Right ventricle myocardium superior (tissue), 1 donor: ENCODE measurements at regions of chr21 and their contacts with region 1.

Region 1: DNA sequence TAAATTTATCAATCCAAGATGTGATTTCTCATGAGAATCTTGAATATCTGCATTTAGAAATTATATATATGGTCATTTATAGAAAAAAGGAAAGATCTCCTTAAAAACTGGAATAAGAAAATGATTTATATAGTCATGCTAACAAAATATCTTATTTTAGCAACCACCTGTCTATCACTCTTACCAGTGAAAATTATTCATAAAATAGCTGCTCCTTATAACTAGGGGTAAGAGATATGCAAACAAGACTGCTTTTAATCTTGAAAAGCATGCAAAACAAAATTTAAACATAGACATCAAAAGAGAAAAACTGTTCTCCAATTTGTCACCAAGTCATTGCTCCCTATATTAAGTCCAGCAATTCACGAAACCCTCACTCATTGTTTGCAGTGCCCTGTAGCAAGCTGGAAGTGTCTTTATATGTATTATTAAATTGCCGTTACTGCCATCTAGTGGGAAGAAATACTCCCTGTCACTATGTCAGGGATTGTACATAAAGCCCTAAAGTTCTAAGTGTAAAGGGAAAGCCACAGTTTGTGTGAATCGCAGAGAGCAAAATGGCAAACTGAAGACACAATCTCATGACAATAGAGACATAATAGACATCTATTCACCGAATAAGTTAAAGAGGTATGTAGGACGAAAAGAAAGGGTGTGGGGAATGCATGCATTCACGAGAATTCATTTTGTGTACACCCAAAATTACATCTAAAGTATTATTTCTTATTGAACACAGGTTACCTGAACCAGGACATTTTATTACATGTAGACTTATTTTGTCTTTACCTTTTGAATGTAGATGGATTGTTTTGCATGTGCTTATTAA is 600.5 kb downstream of the USP25 start:
- DNase-seq: no peak
- ATAC-seq: peak; percentile 98

Region 2: DNA sequence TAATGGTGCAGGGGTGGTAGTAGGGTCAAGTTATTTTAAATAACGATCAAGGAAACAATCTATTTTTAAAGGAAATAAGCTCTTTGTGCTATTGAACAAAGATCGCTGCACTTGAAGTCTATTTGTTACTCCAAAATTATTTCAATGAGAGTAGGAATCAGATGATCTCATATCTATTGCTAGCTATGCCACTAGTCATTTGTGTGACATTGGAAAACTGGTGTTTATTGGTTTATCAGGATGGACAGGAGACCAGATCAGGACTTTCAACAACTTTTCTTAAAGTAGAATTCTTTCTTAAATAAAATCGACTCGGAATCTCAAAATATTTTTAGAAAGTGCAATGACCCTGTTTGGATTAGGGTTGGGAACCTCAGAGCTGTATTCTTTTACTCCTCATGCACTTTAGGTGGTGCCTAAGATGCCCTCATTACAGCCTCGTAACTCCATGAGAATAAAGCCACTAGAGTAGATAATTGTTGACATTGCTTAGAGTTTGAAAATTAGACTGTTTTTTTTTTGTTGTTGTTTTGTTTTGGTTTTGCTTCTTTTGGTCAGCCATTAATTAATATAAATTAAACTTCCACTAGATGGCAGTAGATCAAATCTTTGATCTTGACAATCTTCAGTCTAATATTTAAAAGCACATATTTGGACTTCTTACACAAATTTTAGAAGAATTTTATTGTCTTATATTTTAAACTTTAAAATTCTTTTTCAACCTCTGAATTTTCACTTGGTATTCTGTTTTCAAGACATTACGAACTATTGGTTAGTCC is 248.1 kb before region 1 on chr21:
- intact Hi-C with region 1: loop called (anchors 5 kb)
- DNase-seq: no peak
- ATAC-seq: peak; percentile 40

Region 3: DNA sequence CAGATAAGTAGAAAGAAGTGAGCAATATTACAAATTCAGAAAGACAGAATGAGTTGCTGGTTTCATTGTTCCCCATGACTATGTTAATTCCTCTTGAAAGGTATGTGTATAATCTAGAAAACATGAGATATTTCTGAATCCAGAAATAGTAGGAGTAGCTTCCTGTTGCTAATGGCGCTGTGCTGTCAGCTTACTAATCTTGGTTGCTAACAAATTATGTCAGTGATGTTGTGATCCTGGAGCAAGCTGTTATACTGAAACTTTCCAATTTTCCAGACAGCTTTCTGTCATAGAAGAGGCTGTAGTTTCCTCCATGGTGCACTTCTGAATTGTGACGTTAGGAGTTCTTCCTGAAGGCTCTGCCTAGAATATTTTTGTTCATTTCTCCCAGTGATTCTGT is 228.2 kb before region 1 on chr21:
- intact Hi-C with region 1: no loop called
- DNase-seq: no peak
- ATAC-seq: no peak

Region 4: GRCh38 chr21:16194095-16194787 is 136.1 kb before region 1 on chr21:
- intact Hi-C with region 1: loop called (anchors 10 kb)
- DNase-seq: peak; percentile 75
- ATAC-seq: peak; percentile 94

Region 5: GRCh38 chr21:16407403-16408240 is 77.3 kb after region 1 on chr21:
- intact Hi-C with region 1: no loop called
- DNase-seq: no peak
- ATAC-seq: no peak

Region 6: DNA sequence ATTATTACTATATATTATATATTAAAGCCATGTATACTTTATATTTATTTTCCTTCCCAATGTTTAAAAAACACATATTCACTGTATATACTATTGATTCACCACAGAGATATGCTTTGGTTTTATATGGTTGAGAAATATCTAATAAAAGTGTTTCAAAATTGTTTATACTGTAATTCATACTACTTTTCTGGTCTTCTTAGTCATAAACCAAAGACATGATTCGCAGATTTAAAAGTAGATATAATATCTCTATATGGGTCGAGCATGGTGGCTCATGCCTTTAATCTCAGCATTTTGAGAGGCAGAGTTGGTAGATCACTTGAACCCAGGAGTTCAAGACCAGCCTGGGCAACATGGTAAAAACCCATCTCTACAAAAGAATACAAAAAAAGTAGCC is 137.9 kb after region 1 on chr21:
- intact Hi-C with region 1: no loop called
- DNase-seq: no peak
- ATAC-seq: no peak